A549 (cell line): ENCODE measurements at regions of chr2 and their contacts with region 1.

Region 1: DNA sequence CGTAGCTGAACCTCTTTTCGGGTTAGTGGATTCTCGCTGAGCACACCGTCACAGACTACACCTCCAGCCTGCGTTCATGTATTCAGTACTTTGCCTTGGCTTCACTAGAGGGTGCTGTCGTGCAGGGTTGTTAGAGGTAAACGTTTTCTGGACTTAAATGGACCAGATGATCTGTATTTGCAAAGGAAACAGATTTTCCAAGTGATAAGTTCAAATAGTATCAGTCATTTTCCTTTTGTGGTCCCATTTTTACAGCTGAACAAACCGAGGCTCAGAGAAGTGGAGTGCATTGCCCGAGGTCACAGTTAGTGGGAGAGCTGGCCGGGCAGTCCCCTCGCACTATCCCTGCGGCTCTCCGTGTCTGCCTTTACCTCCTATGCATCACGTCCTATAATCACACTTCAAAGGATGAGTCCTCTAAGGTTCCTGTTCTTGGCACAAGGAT is 125.9 kb downstream of the MAP4K4 start:
- DNase-seq: peak in 1 of 2 experiments; percentile 67
- ATAC-seq: peak; percentile 76 to 86
- H3K4me3 ChIP-seq: no peak overlapping the region
- H3K27ac ChIP-seq: peak overlapping the region; percentile 11 to 25; a peak in 1 of 6 replicates
- H3K4me1 ChIP-seq: peaks cover 58% of the 10 kb centered on the region
- CTCF ChIP-seq: peak; percentile 60
- EP300 ChIP-seq: no peak
- POLR2A ChIP-seq: no peak
- RAD21 ChIP-seq: peak; percentile 54 to 56

Region 2: GRCh38 chr2:101697124-101698013 is 126.0 kb before region 1 on chr2 and contains the start of gene MAP4K4:
- CTCF ChIA-PET with region 1: interaction called, 14 read pairs
- POLR2A ChIA-PET with region 1: interaction called, 4 read pairs
- DNase-seq: peak; percentile 72 to 82
- ATAC-seq: peak; percentile 78 to 87
- H3K4me3 ChIP-seq: peak within 1 kb of the TSS; percentile 96
- H3K27ac ChIP-seq: peak within 1 kb of the TSS; percentile 91 to 93
- H3K4me1 ChIP-seq: peaks cover 13% of the 10 kb centered on the region
- CTCF ChIP-seq: peak; percentile 41
- EP300 ChIP-seq: no peak
- POLR2A ChIP-seq: peak; percentile 68
- RAD21 ChIP-seq: peak; percentile 42 to 60; a peak in 4 of 5 replicates
- polyA plus RNA-seq, gene MAP4K4: 82.2 and 91.4 TPM in 2 replicates

Region 3: GRCh38 chr2:101806123-101806522 is 17.2 kb before region 1 on chr2:
- CTCF ChIA-PET with region 1: interaction called, 29 read pairs
- POLR2A ChIA-PET with region 1: no interaction called
- DNase-seq: peak; percentile 38 to 53
- ATAC-seq: peak; percentile 52 to 69; a peak in 5 of 6 replicates
- H3K4me3 ChIP-seq: peak overlapping the region; percentile 11; the same call in 1 of the 3 replicates
- H3K27ac ChIP-seq: peak overlapping the region; percentile 57 to 88
- H3K4me1 ChIP-seq: peaks cover 63% of the 10 kb centered on the region
- CTCF ChIP-seq: no peak
- EP300 ChIP-seq: no peak
- POLR2A ChIP-seq: no peak
- RAD21 ChIP-seq: no peak

Region 4: GRCh38 chr2:101983928-101984327 is 160.6 kb after region 1 on chr2:
- CTCF ChIA-PET with region 1: no interaction called
- POLR2A ChIA-PET with region 1: no interaction called
- DNase-seq: peak in 1 of 2 experiments; percentile 18
- ATAC-seq: peak in 1 of 2 experiments; percentile 69; a peak in 3 of 6 replicates
- H3K4me3 ChIP-seq: no peak overlapping the region
- H3K27ac ChIP-seq: no peak overlapping the region
- H3K4me1 ChIP-seq: no peaks in the 10 kb centered on the region
- CTCF ChIP-seq: peak; percentile 19; the same call in 2 of the 3 replicates
- EP300 ChIP-seq: no peak
- POLR2A ChIP-seq: no peak
- RAD21 ChIP-seq: peak; percentile 13 to 35; a peak in 1 of 5 replicates